ENCODE measurements at regions of chr17 and their contacts with region 1.

Region 1: GRCh38 chr17:7561028-7561575 is 617 bp upstream of the SENP3 start:
- DNase-seq: peak; percentile 82 to 94 (median 90)
- H3K4me3 ChIP-seq: peak overlapping the region; percentile 63 to 100 (median 96)
- H3K27ac ChIP-seq: peak overlapping the region; percentile 72 to 98 (median 94)
- H3K27me3 ChIP-seq: no peaks in the 10 kb centered on the region
- CTCF ChIP-seq: peak; percentile 55 to 92 (median 81)

Region 2: GRCh38 chr17:7239091-7240027 is 321.7 kb before region 1 on chr17 and contains the start of gene PHF23:
- intact Hi-C with region 1: loop called in 1 of 2 experiments (anchors 10 kb)
- DNase-seq: peak; percentile 98 to 99 (median 99)
- H3K4me3 ChIP-seq: peak within 1 kb of the TSS; percentile 59 to 100 (median 95)
- H3K27ac ChIP-seq: peak within 1 kb of the TSS; percentile 58 to 100 (median 99)
- H3K27me3 ChIP-seq: no peaks in the 10 kb centered on the region
- CTCF ChIP-seq: peak in 7 of 56 donors; percentile 16 to 32 (median 22)
- total RNA-seq, gene PHF23: 21.3 to 54.1 (median 37.2) TPM

Region 3: DNA sequence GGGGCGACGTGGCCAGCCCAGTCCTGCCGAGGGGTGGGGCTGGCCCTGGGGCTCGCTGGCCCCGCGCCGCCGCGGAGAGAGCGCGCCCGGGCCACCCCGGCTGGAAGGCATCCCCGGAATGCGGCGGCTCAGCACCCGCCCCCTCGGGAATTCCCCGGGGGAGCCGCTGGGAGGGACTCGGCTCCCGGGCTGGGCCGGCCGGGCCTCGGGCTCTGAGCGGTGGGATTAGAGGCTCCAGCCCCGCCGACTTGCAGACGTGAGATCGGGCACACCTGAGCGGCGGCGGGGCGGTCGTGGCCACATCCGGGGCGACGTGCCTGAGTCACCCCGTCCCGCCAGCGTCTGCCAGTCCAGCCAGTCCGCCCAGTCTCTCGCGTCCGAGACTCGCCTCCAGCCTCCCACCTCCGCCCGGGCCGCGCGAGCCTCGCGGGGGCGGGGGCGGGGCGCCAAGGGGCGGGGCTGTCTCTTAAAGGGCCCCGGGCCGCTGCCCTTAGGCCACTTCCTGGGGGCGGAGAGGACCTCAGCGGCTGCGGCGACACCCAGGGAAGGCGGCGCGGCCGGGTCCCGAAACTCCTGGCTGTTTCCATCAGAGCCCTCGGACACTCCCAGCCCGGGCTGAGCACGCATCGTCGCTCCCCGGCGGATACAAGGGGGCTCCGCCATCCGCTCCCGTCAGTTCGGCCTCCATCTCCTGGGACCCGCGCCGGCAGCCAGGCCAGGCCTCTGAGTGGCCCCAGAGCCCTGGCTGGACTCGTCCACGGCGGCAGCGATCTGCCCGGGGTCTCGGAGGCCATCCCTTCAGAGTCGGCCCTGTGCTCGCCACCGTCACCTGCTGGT is 209.2 kb before region 1 on chr17 and contains the start of gene KCTD11:
- intact Hi-C with region 1: loop called in 1 of 2 experiments (anchors 2 kb)
- DNase-seq: peak; percentile 72 to 91 (median 82)
- H3K4me3 ChIP-seq: peak within 1 kb of the TSS; percentile 53 to 95 (median 82)
- H3K27ac ChIP-seq: peak within 1 kb of the TSS; percentile 63 to 99 (median 96)
- H3K27me3 ChIP-seq: peaks cover 0 to 9% (median 0%) of the 10 kb centered on the region in 45 donors
- CTCF ChIP-seq: peak in 27 of 56 donors; percentile 4 to 54 (median 32)
- total RNA-seq, gene KCTD11: 2.0 to 7.9 (median 4.1) TPM

Region 4: GRCh38 chr17:7484067-7484918 is 76.8 kb before region 1 on chr17 and contains the start of gene POLR2A:
- intact Hi-C with region 1: loop called (anchors 1 to 2 kb)
- DNase-seq: peak; percentile 96 to 98 (median 97)
- H3K4me3 ChIP-seq: peak within 1 kb of the TSS; percentile 61 to 98 (median 84)
- H3K27ac ChIP-seq: peak within 1 kb of the TSS; percentile 94 to 100 (median 100)
- H3K27me3 ChIP-seq: no peaks in the 10 kb centered on the region
- CTCF ChIP-seq: peak in 10 of 56 donors; percentile 4 to 61 (median 44)
- total RNA-seq, gene POLR2A: 83.5 to 163 (median 124) TPM

Region 5: GRCh38 chr17:7572588-7573323 is 11.7 kb after region 1 on chr17:
- intact Hi-C with region 1: loop called in 1 of 2 experiments (anchors 1 kb)
- DNase-seq: peak in 9 of 10 donors; percentile 99 to 100 (median 100)
- H3K4me3 ChIP-seq: peak overlapping the region; percentile 64 to 100 (median 99)
- H3K27ac ChIP-seq: peak overlapping the region; percentile 86 to 100 (median 98)
- H3K27me3 ChIP-seq: no peaks in the 10 kb centered on the region
- CTCF ChIP-seq: peak in 17 of 56 donors; percentile 4 to 42 (median 16)

Region 6: DNA sequence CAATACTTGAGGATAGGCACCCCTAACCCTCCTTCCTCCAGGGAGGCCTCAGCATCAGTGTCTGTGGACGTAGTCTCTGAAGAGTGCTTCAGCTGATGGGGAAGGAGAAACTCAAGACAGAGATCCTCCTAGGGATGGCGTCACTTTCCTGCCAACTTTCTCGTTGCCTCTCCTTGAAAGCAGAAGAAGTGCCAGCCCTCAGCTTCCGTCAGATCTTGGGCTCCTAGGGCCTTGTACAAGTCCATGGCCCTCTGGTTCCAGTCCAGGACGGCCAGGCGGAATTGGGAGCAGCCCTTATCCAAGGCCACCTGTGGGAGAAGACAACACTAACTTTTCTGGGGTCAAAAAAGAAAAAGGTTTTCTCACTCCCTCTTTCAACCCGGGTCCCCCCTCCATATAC is 65.2 kb after region 1 on chr17:
- intact Hi-C with region 1: no loop called
- DNase-seq: no peak
- H3K4me3 ChIP-seq: peak overlapping the region in 55 of 59 donors; percentile 67 to 94 (median 85)
- H3K27ac ChIP-seq: peak overlapping the region in 47 of 59 donors; percentile 22 to 98 (median 92)
- H3K27me3 ChIP-seq: no peaks in the 10 kb centered on the region
- CTCF ChIP-seq: no peak